A673 (cell line): ENCODE measurements at regions of chr7 and their contacts with region 1.

Region 1: DNA sequence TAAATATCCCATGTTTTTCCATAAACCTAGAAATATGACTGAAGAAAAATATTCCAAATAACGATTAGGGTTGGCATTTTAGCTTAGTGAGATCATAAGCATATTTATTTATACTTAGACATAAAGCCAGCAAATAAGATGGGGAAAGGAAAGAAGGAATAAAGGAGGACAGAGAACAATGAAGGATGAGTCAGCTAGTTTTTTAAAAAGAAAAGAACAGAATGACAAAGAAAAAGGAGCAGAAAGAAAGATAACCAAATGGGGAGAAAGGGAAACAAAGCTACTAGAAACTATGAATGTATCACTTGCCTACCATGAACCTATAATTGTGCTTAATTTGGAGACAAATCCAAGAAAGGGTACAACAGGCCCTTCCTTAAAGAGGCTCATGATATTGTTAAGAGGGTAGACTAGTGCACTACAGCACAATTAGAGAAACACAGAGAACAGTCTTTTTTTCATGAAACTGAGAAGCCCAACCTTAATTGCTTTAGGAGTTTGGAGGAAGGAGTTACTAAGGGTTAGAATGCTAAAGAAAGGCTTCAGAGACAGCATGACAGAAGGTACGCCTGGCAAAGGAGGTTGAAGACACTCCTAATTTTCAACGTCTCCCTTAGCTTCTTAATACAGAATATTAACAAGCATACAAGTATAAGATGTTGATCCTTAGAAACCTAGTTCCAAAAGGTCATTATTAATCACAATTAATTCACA is 23.9 kb downstream of the HERPUD2 start:
- DNase-seq: no peak
- H3K4me3 ChIP-seq: no peak overlapping the region
- H3K27ac ChIP-seq: peak overlapping the region; percentile 22
- H3K4me1 ChIP-seq: peaks cover 10% of the 10 kb centered on the region
- H3K27me3 ChIP-seq: no peaks in the 10 kb centered on the region
- CTCF ChIP-seq: no peak

Region 2: DNA sequence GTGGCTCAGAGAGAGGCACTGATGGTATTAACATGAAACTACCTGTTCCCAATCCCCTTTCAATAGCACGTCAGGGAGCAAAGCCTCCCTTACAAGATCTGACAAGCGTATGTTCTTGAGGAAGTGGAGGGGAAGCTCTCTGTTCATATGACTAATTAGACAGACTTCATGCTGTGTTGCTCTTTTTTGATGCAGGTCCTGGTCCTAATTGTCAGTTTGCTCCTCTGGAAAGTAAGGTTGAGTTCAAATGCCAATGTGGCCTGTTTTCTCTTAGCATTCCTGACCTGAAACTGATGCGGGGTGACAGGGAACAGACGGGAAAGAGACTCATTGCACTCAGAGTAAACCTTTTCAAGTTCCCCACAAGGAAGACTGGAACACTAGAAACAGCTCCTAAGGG is 390.1 kb before region 1 on chr7:
- CTCF ChIA-PET with region 1: no interaction called
- POLR2A ChIA-PET with region 1: no interaction called
- intact Hi-C with region 1: no loop called
- DNase-seq: no peak
- H3K4me3 ChIP-seq: no peak overlapping the region
- H3K27ac ChIP-seq: no peak overlapping the region
- H3K4me1 ChIP-seq: no peaks in the 10 kb centered on the region
- H3K27me3 ChIP-seq: peaks cover 54% of the 10 kb centered on the region
- CTCF ChIP-seq: no peak

Region 3: GRCh38 chr7:35685781-35686180 is 14.8 kb after region 1 on chr7:
- CTCF ChIA-PET with region 1: no interaction called
- POLR2A ChIA-PET with region 1: interaction called, 15 read pairs
- intact Hi-C with region 1: no loop called
- DNase-seq: no peak
- H3K4me3 ChIP-seq: no peak overlapping the region
- H3K27ac ChIP-seq: no peak overlapping the region
- H3K4me1 ChIP-seq: no peaks in the 10 kb centered on the region
- H3K27me3 ChIP-seq: no peaks in the 10 kb centered on the region
- CTCF ChIP-seq: no peak

Region 4: GRCh38 chr7:36459236-36459960 is 788.4 kb after region 1 on chr7:
- CTCF ChIA-PET with region 1: no interaction called
- POLR2A ChIA-PET with region 1: no interaction called
- intact Hi-C with region 1: no loop called
- DNase-seq: no peak
- H3K4me3 ChIP-seq: no peak overlapping the region
- H3K27ac ChIP-seq: no peak overlapping the region
- H3K4me1 ChIP-seq: no peaks in the 10 kb centered on the region
- H3K27me3 ChIP-seq: no peaks in the 10 kb centered on the region
- CTCF ChIP-seq: no peak